CD8-positive, alpha-beta T cell (primary cell): ENCODE measurements at regions of chr17 and their contacts with region 1.

Region 1: DNA sequence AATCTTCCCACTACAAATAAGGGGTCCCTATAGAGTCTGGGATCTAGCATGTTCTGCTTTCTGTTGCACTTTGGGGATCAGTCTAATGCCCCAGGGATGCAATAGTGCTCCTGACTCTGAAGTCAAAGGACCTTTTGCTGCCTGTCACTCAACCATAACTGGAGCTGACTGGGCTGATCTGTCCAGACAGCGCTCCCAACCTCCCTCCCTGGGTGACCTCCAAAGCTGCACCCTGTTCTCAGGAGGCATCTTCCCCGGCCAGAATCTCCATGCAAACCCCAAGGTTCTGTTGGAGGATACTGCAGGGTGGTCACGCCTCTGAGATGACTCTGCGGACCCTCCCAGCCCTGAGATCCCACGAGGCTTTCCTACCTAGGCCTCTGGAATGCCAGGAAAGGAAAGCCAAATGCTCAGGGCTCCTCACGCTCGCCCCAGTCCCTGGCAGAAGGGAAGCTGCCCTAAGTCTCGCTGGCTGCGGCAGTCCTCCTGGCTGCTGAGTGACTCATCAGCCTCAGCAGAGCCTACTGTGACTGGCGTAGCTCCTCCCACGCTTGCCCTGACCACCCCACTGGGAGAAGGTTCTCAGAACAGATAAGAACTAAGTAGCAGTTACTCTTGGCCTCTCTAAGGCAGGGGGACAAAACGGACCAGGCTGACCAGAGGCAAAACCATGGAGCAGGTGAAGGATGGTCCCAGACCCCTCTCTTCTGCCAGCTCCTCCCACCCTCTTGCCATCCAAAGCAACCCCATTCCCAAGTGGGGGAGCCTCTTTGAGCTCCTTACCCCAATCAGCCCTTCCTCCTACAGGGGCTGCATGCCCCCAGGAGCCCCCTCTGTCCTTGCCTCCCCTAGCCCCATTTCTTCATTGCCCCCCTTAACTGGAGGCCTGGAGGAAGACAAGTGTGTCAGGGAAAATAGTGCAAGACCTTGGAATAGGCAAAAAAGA is 124.1 kb upstream of the TNRC6C start:
- DNase-seq: peak; percentile 20 to 82 (median 69)
- ATAC-seq: peak; percentile 80
- H3K4me3 ChIP-seq: no peak overlapping the region
- H3K4me3 Mint-ChIP-seq: peak overlapping the region; percentile 18
- H3K27ac ChIP-seq: no peak overlapping the region
- H3K27ac Mint-ChIP-seq: peak overlapping the region; percentile 67
- H3K4me1 ChIP-seq: peaks cover 25% of the 10 kb centered on the region
- H3K4me1 Mint-ChIP-seq: peaks cover 41% of the 10 kb centered on the region
- H3K27me3 ChIP-seq: no peaks in the 10 kb centered on the region
- H3K27me3 Mint-ChIP-seq: no peaks in the 10 kb centered on the region
- CTCF ChIP-seq: no peak

Region 2: GRCh38 chr17:77790143-77790829 is 44.2 kb before region 1 on chr17:
- CTCF ChIA-PET with region 1: no interaction called
- POLR2A ChIA-PET with region 1: no interaction called
- intact Hi-C with region 1: loop called (anchors 1 to 5 kb)
- DNase-seq: no peak
- ATAC-seq: no peak
- H3K4me3 ChIP-seq: no peak overlapping the region
- H3K4me3 Mint-ChIP-seq: no peak overlapping the region
- H3K27ac ChIP-seq: no peak overlapping the region
- H3K27ac Mint-ChIP-seq: no peak overlapping the region
- H3K4me1 ChIP-seq: peaks cover 3% of the 10 kb centered on the region
- H3K4me1 Mint-ChIP-seq: peaks cover 7% of the 10 kb centered on the region
- H3K27me3 ChIP-seq: no peaks in the 10 kb centered on the region
- H3K27me3 Mint-ChIP-seq: no peaks in the 10 kb centered on the region
- CTCF ChIP-seq: no peak

Region 3: GRCh38 chr17:77884019-77884418 is 49.6 kb after region 1 on chr17:
- CTCF ChIA-PET with region 1: no interaction called
- POLR2A ChIA-PET with region 1: no interaction called
- intact Hi-C with region 1: no loop called
- DNase-seq: peak in 5 of 9 experiments; percentile 64 to 82 (median 66)
- ATAC-seq: no peak
- H3K4me3 ChIP-seq: no peak overlapping the region
- H3K4me3 Mint-ChIP-seq: peak overlapping the region; percentile 59
- H3K27ac ChIP-seq: peak overlapping the region; percentile 80 to 98
- H3K27ac Mint-ChIP-seq: peak overlapping the region; percentile 98
- H3K4me1 ChIP-seq: peaks cover 74% of the 10 kb centered on the region
- H3K4me1 Mint-ChIP-seq: peaks cover 88% of the 10 kb centered on the region
- H3K27me3 ChIP-seq: no peaks in the 10 kb centered on the region
- H3K27me3 Mint-ChIP-seq: no peaks in the 10 kb centered on the region
- CTCF ChIP-seq: no peak

Region 4: GRCh38 chr17:78168242-78168902 is 333.9 kb after region 1 on chr17 and contains the start of gene SYNGR2:
- CTCF ChIA-PET with region 1: no interaction called
- POLR2A ChIA-PET with region 1: no interaction called
- intact Hi-C with region 1: no loop called
- DNase-seq: peak; percentile 74 to 93 (median 86)
- ATAC-seq: peak; percentile 89
- H3K4me3 ChIP-seq: peak within 1 kb of the TSS; percentile 52 to 59
- H3K4me3 Mint-ChIP-seq: peak within 1 kb of the TSS; percentile 69
- H3K27ac ChIP-seq: peak within 1 kb of the TSS; percentile 52 to 73
- H3K27ac Mint-ChIP-seq: peak within 1 kb of the TSS; percentile 79
- H3K4me1 ChIP-seq: peaks cover 30% of the 10 kb centered on the region
- H3K4me1 Mint-ChIP-seq: peaks cover 36% of the 10 kb centered on the region
- H3K27me3 ChIP-seq: no peaks in the 10 kb centered on the region
- H3K27me3 Mint-ChIP-seq: no peaks in the 10 kb centered on the region
- CTCF ChIP-seq: no peak
- total RNA-seq, gene SYNGR2: 36.4 to 36.7 TPM